ENCODE measurements at regions of chr5 and their contacts with region 1.

Region 1: DNA sequence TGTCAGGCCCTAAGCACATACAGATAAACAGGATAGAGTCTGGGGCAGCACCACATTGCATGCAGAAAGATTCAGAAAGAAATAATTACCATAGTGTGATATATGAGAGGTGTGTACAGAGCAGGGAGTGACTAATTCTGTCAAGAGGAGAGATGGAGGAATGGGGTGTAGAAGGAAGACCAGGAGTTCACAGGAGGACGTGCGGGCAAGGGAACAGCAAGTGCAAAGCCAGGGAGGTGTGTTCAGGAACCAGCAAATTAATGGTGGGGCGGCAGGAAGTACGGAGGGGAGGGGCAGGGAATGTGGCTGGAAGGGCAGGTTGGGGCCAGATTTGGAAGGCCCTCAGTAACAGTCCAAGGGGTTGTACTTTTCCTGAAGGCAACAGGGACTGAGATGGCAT is 17.4 kb downstream of the EGR1 start:
- DNase-seq: no peak
- ATAC-seq: no peak; the same call in 2 of the 3 replicates
- H3K4me3 ChIP-seq: no peak overlapping the region
- H3K27ac ChIP-seq: no peak overlapping the region
- H3K4me1 ChIP-seq: no peaks in the 10 kb centered on the region
- H3K27me3 ChIP-seq: no peaks in the 10 kb centered on the region; a peak in 1 of 4 replicates
- CTCF ChIP-seq: no peak
- EP300 ChIP-seq: no peak
- POLR2A ChIP-seq: no peak
- RAD21 ChIP-seq: no peak

Region 2: DNA sequence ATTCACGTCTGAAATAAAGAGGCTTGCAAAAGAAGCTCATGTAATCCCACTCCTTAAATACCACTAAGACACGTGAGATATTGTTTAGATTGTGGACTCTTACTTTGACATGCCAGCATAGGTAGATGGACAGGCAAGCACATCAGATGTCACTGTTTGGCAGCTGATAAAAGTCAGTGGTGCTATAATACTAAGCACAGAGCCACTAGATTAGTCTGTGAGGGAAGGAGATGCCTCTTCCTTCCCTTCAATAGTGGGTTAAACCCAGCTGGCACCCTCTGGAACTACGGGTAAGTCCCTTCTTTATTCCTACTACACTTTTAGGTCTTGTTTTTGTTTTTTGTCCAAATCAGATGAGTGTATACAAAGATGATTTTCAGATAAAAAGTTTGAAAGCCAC is 615.0 kb before region 1 on chr5 and contains the start of gene MYOT:
- CTCF ChIA-PET with region 1: no interaction called
- POLR2A ChIA-PET with region 1: no interaction called
- RAD21 ChIA-PET with region 1: no interaction called
- SMC1A ChIA-PET with region 1: no interaction called
- in situ Hi-C with region 1: no loop called
- intact Hi-C with region 1: no loop called
- DNase-seq: no peak
- ATAC-seq: no peak
- H3K4me3 ChIP-seq: no peak within 1 kb of the TSS
- H3K27ac ChIP-seq: no peak within 1 kb of the TSS
- H3K4me1 ChIP-seq: peaks cover 4% of the 10 kb centered on the region; the same call in 1 of the 2 replicates
- H3K27me3 ChIP-seq: no peaks in the 10 kb centered on the region
- CTCF ChIP-seq: no peak
- EP300 ChIP-seq: no peak
- POLR2A ChIP-seq: no peak
- RAD21 ChIP-seq: no peak
- polyA plus RNA-seq, gene MYOT: 0.15 to 0.53 TPM

Region 3: GRCh38 chr5:138470322-138471193 is 12.1 kb before region 1 on chr5:
- CTCF ChIA-PET with region 1: interaction called, 8 read pairs
- POLR2A ChIA-PET with region 1: interaction called, 5 read pairs
- RAD21 ChIA-PET with region 1: no interaction called
- SMC1A ChIA-PET with region 1: interaction called, 7 read pairs
- in situ Hi-C with region 1: no loop called
- intact Hi-C with region 1: loop called (anchors 1 kb)
- DNase-seq: no peak
- ATAC-seq: no peak
- H3K4me3 ChIP-seq: no peak overlapping the region
- H3K27ac ChIP-seq: no peak overlapping the region
- H3K4me1 ChIP-seq: peaks cover 5% of the 10 kb centered on the region
- H3K27me3 ChIP-seq: peaks cover 0 to 6% of the 10 kb centered on the region in 2 experiments; a peak in 1 of 4 replicates
- CTCF ChIP-seq: no peak
- EP300 ChIP-seq: no peak
- POLR2A ChIP-seq: no peak; the same call in 1 of the 2 replicates
- RAD21 ChIP-seq: no peak